ENCODE measurements at regions of chr9 and their contacts with region 1.

Region 1: DNA sequence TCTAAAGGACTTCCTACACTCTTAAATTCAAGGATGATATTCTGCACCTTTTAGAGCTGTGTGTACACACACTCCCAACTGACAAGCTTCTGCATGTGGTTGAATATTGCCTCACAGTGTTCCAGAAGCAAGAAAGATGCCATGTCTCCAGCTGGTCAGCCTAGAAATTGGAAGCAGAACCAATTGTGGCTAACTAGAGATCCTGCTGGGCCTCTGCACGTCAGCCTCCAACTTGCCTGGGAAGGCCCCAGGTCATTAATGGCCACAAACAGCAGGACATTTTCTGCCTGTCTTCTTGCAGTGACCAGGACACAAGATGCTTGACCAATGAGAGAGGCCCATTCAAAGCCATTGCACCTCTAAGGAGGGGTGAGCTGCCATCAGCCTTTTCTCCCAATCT is 571.9 kb upstream of the BRINP1 start:
- DNase-seq: no peak
- ATAC-seq: no peak
- H3K4me3 ChIP-seq: no peak overlapping the region
- H3K27ac ChIP-seq: no peak overlapping the region
- H3K4me1 ChIP-seq: no peaks in the 10 kb centered on the region
- H3K27me3 ChIP-seq: peaks cover 0 to 7% (median 0%) of the 10 kb centered on the region in 7 donors
- CTCF ChIP-seq: no peak

Region 2: DNA sequence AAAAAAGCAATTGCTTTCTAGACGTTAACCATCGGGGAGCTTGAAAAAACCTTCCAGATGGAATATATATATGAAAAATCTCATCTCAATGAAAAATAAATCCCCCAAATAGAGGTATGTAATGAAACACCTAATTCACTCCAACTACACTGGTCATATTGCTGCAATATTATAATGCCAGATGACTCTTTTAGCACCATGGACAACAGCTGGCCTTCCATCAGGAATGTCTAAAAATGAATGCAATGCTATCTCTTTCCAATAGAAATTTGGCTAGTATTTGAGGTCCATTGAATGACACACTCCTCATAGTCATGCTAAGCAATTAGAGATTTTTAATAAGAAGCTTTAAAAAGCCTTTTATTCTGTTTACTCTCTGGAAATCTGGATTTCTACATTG is 231.7 kb before region 1 on chr9:
- intact Hi-C with region 1: no loop called
- DNase-seq: no peak
- ATAC-seq: no peak
- H3K4me3 ChIP-seq: no peak overlapping the region
- H3K27ac ChIP-seq: no peak overlapping the region
- H3K4me1 ChIP-seq: no peaks in the 10 kb centered on the region
- H3K27me3 ChIP-seq: no peaks in the 10 kb centered on the region
- CTCF ChIP-seq: no peak

Region 3: DNA sequence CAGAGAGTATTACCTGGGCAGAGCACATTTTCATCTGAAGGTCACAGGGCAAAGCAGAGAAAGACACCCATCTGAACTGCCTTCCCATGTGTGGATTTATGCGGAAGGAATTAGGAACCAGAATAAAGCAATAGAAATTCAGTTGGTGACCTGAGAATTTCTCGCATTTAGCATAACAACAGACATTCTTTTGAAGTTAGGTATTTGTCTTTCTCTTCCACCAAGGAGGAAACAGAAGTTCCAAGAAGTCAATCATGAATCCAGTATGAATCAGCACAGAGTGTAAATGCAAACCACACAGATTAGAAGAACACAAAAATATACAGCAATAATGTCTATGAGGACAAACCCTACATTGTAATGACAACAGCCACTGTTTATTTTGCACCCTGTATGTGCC is 56.7 kb before region 1 on chr9:
- intact Hi-C with region 1: loop called in 1 of 10 experiments (anchors 10 kb)
- DNase-seq: no peak
- ATAC-seq: no peak
- H3K4me3 ChIP-seq: no peak overlapping the region
- H3K27ac ChIP-seq: no peak overlapping the region
- H3K4me1 ChIP-seq: no peaks in the 10 kb centered on the region
- H3K27me3 ChIP-seq: no peaks in the 10 kb centered on the region
- CTCF ChIP-seq: no peak